ENCODE measurements at regions of chr6 and their contacts with region 1.

Region 1: DNA sequence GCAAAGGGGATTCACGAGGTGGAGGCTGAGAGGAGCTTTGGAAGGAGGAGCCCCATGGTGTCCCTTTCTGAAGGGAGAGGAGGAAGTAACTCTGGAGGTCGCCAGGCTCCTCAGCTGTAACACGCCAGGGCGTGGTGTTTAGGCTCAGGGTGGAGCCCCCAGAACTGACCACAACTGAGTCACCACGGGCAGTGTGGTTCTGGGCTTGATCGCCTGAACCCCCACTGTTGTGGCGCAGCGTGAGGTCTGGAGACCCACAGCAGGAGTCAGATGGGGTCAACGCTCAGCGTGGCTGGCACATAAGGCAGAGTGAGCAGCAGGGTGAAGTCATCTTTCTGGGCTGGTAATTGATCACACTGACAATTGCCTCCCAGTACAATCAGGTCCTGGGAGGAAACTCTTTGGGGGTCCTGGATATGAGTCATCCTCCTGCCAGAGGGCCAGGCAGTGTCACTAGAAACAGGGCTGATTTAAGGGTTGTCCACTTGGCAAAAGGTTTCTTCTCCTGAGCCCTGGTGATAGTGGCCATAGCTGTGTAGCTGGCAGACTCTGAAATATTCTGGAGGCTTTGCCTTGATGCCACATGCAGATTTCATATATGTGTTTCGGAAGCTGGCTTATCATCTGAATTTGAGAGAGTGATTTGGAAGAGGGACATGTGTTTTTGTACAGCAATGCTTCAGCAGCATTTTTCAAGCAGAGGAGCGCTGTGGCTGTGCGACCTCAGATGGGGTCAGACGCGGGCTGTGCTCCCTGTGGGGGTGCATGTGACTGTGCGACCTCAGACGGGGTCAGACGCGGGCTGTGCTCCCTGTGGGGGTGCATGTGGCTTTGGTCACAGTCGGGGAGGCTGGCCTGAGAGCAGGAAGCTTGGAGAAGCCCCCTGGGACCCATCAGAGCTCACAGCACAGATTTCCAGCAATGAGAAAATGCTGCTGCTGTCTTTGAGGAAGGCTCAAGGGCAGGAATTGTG is 50.0 kb downstream of the SYNJ2 start:
- DNase-seq: peak; percentile 93
- ATAC-seq: peak; percentile 69
- H3K4me3 Mint-ChIP-seq: peak overlapping the region; percentile 50
- H3K27ac Mint-ChIP-seq: peak overlapping the region; percentile 86
- H3K4me1 Mint-ChIP-seq: peaks cover 53% of the 10 kb centered on the region
- H3K27me3 Mint-ChIP-seq: no peaks in the 10 kb centered on the region

Region 2: DNA sequence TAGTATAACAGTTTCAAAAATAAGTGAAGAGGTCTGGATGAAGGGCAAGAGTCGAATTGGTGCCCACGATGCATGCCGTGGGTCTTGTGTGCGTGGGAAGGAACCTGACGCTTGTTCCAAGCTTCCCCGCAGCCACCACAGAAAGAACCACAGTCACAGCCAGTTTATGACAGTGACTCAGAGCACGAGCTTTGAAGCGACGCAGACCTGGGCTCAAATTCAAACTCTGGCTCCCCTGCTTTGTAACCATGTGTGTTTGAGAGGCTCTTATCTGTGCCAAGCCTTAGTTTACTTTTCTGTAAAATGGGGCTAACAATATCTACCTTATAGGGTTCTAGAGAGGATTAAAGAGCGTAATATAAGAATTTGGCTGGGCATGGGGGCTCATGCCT is 15.5 kb after region 1 on chr6:
- CTCF ChIA-PET with region 1: interaction called, 23 read pairs
- DNase-seq: peak; percentile 91
- ATAC-seq: peak; percentile 73
- H3K4me3 Mint-ChIP-seq: peak overlapping the region; percentile 9
- H3K27ac Mint-ChIP-seq: peak overlapping the region; percentile 83
- H3K4me1 Mint-ChIP-seq: peaks cover 36% of the 10 kb centered on the region
- H3K27me3 Mint-ChIP-seq: no peaks in the 10 kb centered on the region

Region 3: GRCh38 chr6:158150701-158151100 is 119.0 kb after region 1 on chr6:
- CTCF ChIA-PET with region 1: no interaction called
- DNase-seq: no peak
- ATAC-seq: no peak
- H3K4me3 Mint-ChIP-seq: no peak overlapping the region
- H3K27ac Mint-ChIP-seq: no peak overlapping the region
- H3K4me1 Mint-ChIP-seq: no peaks in the 10 kb centered on the region
- H3K27me3 Mint-ChIP-seq: no peaks in the 10 kb centered on the region

Measured in activated CD8-positive, alpha-beta memory T cell treated with anti-CD3 and anti-CD28 coated beads, Interleukin-2, amount 10 ng/mL, durations not matched to agents 7 days and 5 days (primary cell).